SK-N-SH (cell line): ENCODE measurements at regions of chr10 and their contacts with region 1.

Region 1: DNA sequence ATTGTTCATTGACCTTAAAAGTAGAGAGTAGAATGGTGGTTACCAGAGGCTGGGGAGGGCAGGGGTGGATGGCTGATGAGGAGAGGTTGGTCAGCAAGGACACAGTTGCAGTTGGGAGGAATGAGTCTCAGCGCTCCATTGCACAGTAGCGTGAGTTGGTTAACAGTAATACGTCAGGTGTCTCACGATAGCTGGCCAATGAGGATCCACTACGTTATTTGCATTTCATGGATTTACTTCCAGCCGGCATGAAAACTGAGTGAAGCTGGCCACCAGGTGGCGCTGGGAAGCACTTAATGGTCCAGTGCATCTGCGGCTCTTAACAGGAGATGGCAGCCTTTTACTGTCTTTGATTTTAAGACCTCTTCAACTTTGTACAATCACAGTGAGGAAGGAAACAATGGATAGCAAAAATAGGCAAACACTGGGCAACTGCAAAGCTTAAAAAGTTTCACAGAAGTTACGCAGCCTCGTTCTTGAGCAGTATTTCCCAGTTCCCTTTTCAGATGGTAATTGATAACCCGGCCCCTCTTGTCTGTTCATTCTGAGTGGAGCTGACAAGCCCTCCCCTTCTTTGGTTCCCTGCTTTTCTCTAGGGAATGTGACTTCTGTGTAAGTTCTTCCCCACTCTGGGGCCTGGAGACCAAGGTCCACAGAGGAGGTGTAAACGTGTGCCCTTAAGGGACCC is 23.7 kb downstream of the AKR1E2 start:
- DNase-seq: peak; percentile 75
- H3K4me3 ChIP-seq: peak overlapping the region in 1 of 2 experiments; percentile 24; a peak in 1 of 4 replicates
- H3K27ac ChIP-seq: no peak overlapping the region
- H3K4me1 ChIP-seq: peaks cover 3 to 13% of the 10 kb centered on the region in 2 experiments; a peak in 2 of 4 replicates
- H3K27me3 ChIP-seq: no peaks in the 10 kb centered on the region
- CTCF ChIP-seq: peak; percentile 100
- EP300 ChIP-seq: no peak
- RAD21 ChIP-seq: peak; percentile 99

Region 2: GRCh38 chr10:4833286-4833685 is 16.4 kb before region 1 on chr10:
- CTCF ChIA-PET with region 1: interaction called, 81 read pairs
- POLR2A ChIA-PET with region 1: interaction called, 3 read pairs
- DNase-seq: no peak
- H3K4me3 ChIP-seq: no peak overlapping the region
- H3K27ac ChIP-seq: no peak overlapping the region; a peak in 1 of 4 replicates
- H3K4me1 ChIP-seq: peaks cover 0 to 23% of the 10 kb centered on the region in 2 experiments; a peak in 2 of 4 replicates
- H3K27me3 ChIP-seq: no peaks in the 10 kb centered on the region
- CTCF ChIP-seq: no peak
- EP300 ChIP-seq: no peak
- RAD21 ChIP-seq: no peak

Region 3: GRCh38 chr10:4894335-4894734 is 44.6 kb after region 1 on chr10:
- CTCF ChIA-PET with region 1: interaction called, 13 read pairs
- POLR2A ChIA-PET with region 1: no interaction called
- DNase-seq: no peak
- H3K4me3 ChIP-seq: no peak overlapping the region
- H3K27ac ChIP-seq: peak overlapping the region in 1 of 2 experiments; percentile 47; a peak in 1 of 4 replicates
- H3K4me1 ChIP-seq: peaks cover 0 to 8% of the 10 kb centered on the region in 2 experiments; a peak in 3 of 4 replicates
- H3K27me3 ChIP-seq: no peaks in the 10 kb centered on the region
- CTCF ChIP-seq: no peak
- EP300 ChIP-seq: no peak
- RAD21 ChIP-seq: no peak

Region 4: DNA sequence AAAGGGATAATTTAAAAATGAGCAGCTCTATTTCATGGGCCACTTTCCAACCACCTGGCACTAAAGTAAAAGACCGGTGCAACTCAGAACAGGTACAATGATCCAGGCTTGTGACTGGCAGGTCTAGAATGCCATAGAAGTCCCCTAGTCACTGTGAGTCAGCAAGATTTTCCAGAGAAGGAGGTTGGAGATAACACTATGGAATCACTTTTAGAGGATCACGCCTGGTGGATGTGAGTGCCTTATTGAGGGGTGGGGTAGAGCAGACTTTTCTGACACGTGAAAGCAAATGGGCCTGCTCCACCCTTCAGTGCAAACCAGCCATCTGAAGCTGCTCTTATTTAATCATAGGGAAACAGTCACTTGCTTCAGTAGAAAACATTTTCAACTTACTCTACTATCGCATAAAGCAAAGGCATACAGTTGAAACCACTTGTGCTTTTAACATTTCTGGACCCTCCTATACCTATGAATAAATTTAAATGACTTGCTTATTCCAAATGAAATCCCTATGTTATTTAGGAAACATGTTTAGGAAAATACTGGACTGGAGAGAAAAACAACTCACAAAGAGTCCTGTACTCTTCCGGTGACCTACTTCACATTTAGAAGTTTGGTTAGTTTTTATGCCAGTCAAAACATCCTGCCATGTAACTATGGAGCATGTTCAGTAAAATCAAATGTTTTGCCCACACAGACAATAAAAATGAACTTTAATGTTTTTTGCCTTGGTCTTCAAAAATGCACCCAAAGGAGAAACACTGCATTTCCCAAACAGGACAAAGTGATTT is 92.0 kb after region 1 on chr10:
- CTCF ChIA-PET with region 1: no interaction called
- POLR2A ChIA-PET with region 1: no interaction called
- DNase-seq: no peak
- H3K4me3 ChIP-seq: no peak overlapping the region
- H3K27ac ChIP-seq: no peak overlapping the region
- H3K4me1 ChIP-seq: peaks cover 0 to 8% of the 10 kb centered on the region in 2 experiments; a peak in 1 of 4 replicates
- H3K27me3 ChIP-seq: no peaks in the 10 kb centered on the region
- CTCF ChIP-seq: no peak
- EP300 ChIP-seq: no peak
- RAD21 ChIP-seq: no peak

Region 5: GRCh38 chr10:5283305-5284158 is 433.8 kb after region 1 on chr10:
- CTCF ChIA-PET with region 1: interaction called, 65 read pairs
- POLR2A ChIA-PET with region 1: no interaction called
- DNase-seq: peak; percentile 51
- H3K4me3 ChIP-seq: no peak overlapping the region
- H3K27ac ChIP-seq: no peak overlapping the region
- H3K4me1 ChIP-seq: peaks cover 0 to 13% of the 10 kb centered on the region in 2 experiments; a peak in 1 of 4 replicates
- H3K27me3 ChIP-seq: no peaks in the 10 kb centered on the region; the same call in 1 of the 2 replicates
- CTCF ChIP-seq: peak; percentile 64
- EP300 ChIP-seq: no peak
- RAD21 ChIP-seq: peak; percentile 67

Region 6: GRCh38 chr10:5423771-5424170 is 574.1 kb after region 1 on chr10:
- CTCF ChIA-PET with region 1: interaction called, 10 read pairs
- POLR2A ChIA-PET with region 1: no interaction called
- DNase-seq: no peak
- H3K4me3 ChIP-seq: no peak overlapping the region
- H3K27ac ChIP-seq: peak overlapping the region in 1 of 2 experiments; percentile 21; a peak in 1 of 4 replicates
- H3K4me1 ChIP-seq: peaks cover 0 to 9% of the 10 kb centered on the region in 2 experiments; a peak in 2 of 4 replicates
- H3K27me3 ChIP-seq: no peaks in the 10 kb centered on the region
- CTCF ChIP-seq: no peak
- EP300 ChIP-seq: no peak
- RAD21 ChIP-seq: no peak